Endothelial cell of umbilical vein (primary cell): ENCODE measurements at regions of chr4 and their contacts with region 1.

Region 1: DNA sequence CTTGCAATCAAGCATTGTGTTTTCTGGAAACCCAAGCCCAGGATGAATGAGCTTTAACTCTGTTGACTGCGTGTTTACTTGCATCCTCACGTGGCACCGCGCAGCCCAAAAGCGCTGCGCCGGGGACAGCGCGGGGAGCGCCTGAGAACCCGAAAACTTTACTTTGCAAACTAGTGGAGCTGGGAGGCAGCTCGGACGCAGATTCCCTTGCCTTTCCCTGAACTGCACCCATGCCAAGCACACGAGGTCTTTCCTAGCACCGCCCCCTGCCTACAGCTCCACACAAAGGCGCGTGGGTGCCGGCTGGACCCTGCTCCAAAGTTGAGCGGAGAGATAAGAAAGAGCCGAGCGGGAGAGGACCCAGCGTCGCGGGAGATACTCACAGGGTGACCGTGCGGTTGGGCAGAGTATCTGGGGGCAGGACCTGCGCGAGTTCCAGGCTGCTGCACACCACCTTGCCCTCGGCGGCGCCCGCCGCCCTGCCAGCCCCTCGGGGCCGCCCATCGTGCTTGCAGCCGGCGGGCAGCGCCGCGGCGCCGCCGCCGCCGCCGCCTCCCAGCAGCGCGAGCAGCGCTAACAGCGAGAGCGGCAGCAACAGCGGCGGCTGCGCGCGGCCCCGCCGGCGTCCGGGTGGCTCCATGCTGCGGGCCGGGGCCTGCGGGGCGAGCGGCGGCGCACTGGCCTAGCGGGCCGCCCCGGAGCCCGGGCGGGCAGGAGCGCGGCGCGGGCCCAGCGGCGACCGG is 550 bp downstream of the ADGRA3 start:
- DNase-seq: peak; percentile 77
- H3K4me3 ChIP-seq: peak overlapping the region; percentile 62 to 85 (median 68)
- H3K27ac ChIP-seq: peak overlapping the region; percentile 4
- H3K4me1 ChIP-seq: peaks cover 17% of the 10 kb centered on the region
- H3K27me3 ChIP-seq: no peaks in the 10 kb centered on the region
- CTCF ChIP-seq: no peak
- POLR2A ChIP-seq: no peak

Region 2: DNA sequence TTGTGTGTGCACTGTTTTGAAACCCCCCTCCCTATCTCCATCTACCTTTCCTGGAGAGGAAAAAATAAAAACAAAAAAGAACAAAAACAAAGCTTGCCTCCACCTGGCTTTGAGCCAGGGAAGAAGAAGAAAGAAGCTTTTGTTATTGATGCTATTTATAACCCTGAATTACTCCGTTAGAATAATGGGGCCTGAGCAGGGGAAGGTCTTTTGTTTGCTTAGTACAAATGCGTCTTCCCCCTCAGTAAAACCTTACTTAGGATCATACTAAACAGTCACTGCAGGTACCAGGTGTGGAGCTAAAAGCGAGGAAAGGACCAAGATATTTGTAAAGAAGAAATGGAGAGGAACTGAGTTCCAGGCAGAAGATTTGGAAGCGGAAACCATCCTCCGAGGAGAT is 918.8 kb before region 1 on chr4:
- CTCF ChIA-PET with region 1: no interaction called
- POLR2A ChIA-PET with region 1: no interaction called
- dilution Hi-C with region 1: no loop called
- intact Hi-C with region 1: no loop called
- DNase-seq: peak; percentile 38
- H3K4me3 ChIP-seq: no peak overlapping the region
- H3K27ac ChIP-seq: no peak overlapping the region
- H3K4me1 ChIP-seq: no peaks in the 10 kb centered on the region
- H3K27me3 ChIP-seq: no peaks in the 10 kb centered on the region
- CTCF ChIP-seq: no peak
- POLR2A ChIP-seq: no peak

Region 3: GRCh38 chr4:21802406-21802805 is 712.9 kb before region 1 on chr4:
- CTCF ChIA-PET with region 1: no interaction called
- POLR2A ChIA-PET with region 1: no interaction called
- dilution Hi-C with region 1: no loop called
- intact Hi-C with region 1: loop called (anchors 2 kb)
- DNase-seq: peak; percentile 89
- H3K4me3 ChIP-seq: peak overlapping the region in 1 of 3 experiments; percentile 32
- H3K27ac ChIP-seq: peak overlapping the region; percentile 92
- H3K4me1 ChIP-seq: peaks cover 17% of the 10 kb centered on the region
- H3K27me3 ChIP-seq: no peaks in the 10 kb centered on the region
- CTCF ChIP-seq: no peak
- POLR2A ChIP-seq: no peak

Region 4: DNA sequence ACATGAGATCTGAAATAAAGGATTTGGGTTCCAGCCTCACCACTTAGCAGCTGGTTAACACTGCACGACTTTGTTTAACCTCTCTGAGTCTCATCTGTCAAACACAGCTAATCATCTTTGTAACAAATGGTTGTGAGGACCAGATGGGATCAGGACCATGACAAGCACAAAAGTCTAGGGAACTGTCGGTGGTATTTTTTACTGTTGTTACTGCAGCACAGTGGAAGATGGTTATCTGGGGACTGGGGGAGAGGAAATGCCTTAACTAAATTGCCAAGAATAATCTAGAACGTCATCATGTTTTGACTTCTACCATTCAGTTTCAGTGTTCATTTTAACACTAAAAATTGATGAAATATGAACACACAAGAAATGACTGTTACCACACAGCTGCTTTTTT is 98.9 kb before region 1 on chr4:
- CTCF ChIA-PET with region 1: no interaction called
- POLR2A ChIA-PET with region 1: interaction called, 3 read pairs
- dilution Hi-C with region 1: no loop called
- intact Hi-C with region 1: loop called (anchors 2 kb)
- DNase-seq: peak; percentile 82
- H3K4me3 ChIP-seq: no peak overlapping the region
- H3K27ac ChIP-seq: peak overlapping the region; percentile 30
- H3K4me1 ChIP-seq: peaks cover 12% of the 10 kb centered on the region
- H3K27me3 ChIP-seq: no peaks in the 10 kb centered on the region
- CTCF ChIP-seq: no peak
- POLR2A ChIP-seq: no peak

Region 5: DNA sequence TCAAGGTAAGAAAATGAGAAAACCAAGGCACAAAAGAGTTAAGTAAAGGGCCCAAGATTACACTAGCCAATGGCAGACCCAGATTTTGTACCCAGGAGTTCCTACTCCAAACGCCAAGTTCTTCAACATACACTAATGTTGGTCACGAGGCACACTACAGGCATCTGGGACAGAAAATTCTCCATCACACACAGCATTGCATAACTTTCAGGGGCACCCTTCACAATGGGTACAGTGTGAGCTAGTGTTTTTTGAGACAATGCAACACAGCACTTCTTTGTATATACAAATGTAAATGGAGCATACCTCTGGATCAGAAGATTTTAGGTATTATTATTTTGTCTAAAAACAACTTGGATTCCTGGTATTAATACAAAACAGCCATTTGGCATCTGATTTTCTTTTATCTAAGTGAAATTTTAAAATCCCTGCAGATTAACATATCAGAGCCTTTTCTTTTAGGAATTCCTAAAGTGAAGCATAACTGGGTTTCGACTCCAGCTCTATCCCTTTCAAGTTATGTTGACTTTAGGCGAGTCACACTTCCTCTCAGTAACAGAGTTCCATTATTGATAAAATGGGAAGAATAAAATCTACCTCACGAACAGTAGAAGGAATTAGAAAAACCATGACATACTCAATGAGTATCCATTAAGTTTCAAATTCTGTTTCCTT is 40.5 kb before region 1 on chr4:
- CTCF ChIA-PET with region 1: interaction called, 5 read pairs
- POLR2A ChIA-PET with region 1: interaction called, 3 read pairs
- dilution Hi-C with region 1: no loop called
- intact Hi-C with region 1: loop called (anchors 2 kb)
- DNase-seq: peak; percentile 52
- H3K4me3 ChIP-seq: no peak overlapping the region
- H3K27ac ChIP-seq: peak overlapping the region; percentile 29
- H3K4me1 ChIP-seq: peaks cover 14% of the 10 kb centered on the region
- H3K27me3 ChIP-seq: no peaks in the 10 kb centered on the region
- CTCF ChIP-seq: no peak
- POLR2A ChIP-seq: no peak

Region 6: DNA sequence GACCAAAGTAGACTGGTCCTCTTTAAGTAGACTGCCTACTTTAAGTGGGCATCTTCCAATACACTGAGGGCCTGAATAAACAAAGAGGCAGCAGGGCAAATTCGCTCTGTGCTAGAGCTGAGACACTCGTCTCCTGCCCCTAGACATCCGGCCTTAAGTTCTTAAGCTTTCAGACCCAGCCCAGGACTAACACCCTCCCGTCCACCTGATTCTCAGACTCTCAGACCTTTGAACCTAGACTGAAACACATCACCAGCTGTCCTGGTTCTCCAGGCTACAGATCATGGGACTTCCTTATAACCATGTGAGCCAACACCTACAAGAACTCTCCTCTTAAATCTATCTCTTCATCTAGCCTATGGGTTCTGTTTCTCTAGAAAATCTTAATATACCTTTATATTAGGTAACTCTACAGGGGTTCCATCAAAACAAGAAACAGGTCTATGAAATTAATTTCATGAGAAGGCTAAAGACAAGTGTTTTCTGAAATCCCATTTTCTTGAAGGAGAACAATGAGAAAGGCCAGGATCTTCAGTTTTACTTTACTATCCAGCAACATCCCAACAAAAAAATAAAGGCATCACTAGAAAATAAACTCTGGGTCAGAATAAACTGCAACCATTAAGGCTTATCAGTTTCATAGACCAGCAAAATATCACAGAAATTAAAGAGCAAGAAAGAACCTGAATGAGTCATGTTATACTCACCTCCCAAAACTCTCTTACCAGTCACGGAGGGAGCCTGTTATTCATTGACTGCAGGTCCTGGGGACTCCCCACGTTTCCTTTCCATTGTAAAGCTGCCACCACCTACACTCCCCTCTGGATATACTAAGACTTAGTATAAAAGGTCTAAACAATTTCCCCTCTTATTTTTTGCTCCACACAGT is 14.2 kb before region 1 on chr4:
- CTCF ChIA-PET with region 1: interaction called, 4 read pairs
- POLR2A ChIA-PET with region 1: no interaction called
- dilution Hi-C with region 1: no loop called
- intact Hi-C with region 1: loop called (anchors 1 kb)
- DNase-seq: peak; percentile 51
- H3K4me3 ChIP-seq: no peak overlapping the region
- H3K27ac ChIP-seq: no peak overlapping the region
- H3K4me1 ChIP-seq: peaks cover 3% of the 10 kb centered on the region
- H3K27me3 ChIP-seq: no peaks in the 10 kb centered on the region
- CTCF ChIP-seq: no peak
- POLR2A ChIP-seq: no peak

Region 7: GRCh38 chr4:22552812-22553211 is 37.5 kb after region 1 on chr4:
- CTCF ChIA-PET with region 1: no interaction called
- POLR2A ChIA-PET with region 1: no interaction called
- dilution Hi-C with region 1: no loop called
- intact Hi-C with region 1: no loop called
- DNase-seq: no peak
- H3K4me3 ChIP-seq: no peak overlapping the region
- H3K27ac ChIP-seq: no peak overlapping the region
- H3K4me1 ChIP-seq: no peaks in the 10 kb centered on the region
- H3K27me3 ChIP-seq: no peaks in the 10 kb centered on the region
- CTCF ChIP-seq: no peak
- POLR2A ChIP-seq: no peak